Endothelial cell of umbilical vein (primary cell): ENCODE measurements at regions of chr15 and their contacts with region 1.

Region 1: GRCh38 chr15:38072348-38073177 is 138.1 kb downstream of the TMCO5A start:
- DNase-seq: peak; percentile 74
- H3K4me3 ChIP-seq: peak overlapping the region; percentile 11 to 61 (median 35)
- H3K27ac ChIP-seq: peak overlapping the region; percentile 69
- H3K4me1 ChIP-seq: peaks cover 40% of the 10 kb centered on the region
- H3K27me3 ChIP-seq: no peaks in the 10 kb centered on the region
- CTCF ChIP-seq: peak in 1 of 2 donors; percentile 1
- POLR2A ChIP-seq: peak; percentile 71

Region 2: GRCh38 chr15:37847776-37848175 is 224.8 kb before region 1 on chr15:
- CTCF ChIA-PET with region 1: no interaction called
- POLR2A ChIA-PET with region 1: no interaction called
- dilution Hi-C with region 1: no loop called
- intact Hi-C with region 1: no loop called
- DNase-seq: no peak
- H3K4me3 ChIP-seq: no peak overlapping the region
- H3K27ac ChIP-seq: no peak overlapping the region
- H3K4me1 ChIP-seq: no peaks in the 10 kb centered on the region
- H3K27me3 ChIP-seq: no peaks in the 10 kb centered on the region
- CTCF ChIP-seq: no peak
- POLR2A ChIP-seq: no peak

Region 3: DNA sequence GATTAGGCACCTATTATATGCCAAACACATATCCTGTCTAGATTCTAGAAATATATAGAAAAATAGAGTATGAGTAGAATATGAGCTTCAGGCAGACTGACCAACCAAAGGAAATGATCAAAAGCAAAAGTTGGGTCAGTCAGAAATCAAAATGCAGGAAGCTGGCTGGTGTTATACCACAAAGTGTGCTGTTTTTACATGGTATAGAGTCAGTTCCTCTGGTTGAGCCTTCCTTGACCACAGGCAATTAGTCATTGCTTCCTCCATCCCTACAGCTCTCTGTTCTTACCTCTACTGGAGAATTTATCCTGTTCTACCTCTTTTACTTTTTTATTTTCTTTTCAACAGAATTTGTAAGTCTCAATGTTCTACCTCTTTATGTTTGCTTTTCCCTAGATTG is 11.7 kb after region 1 on chr15:
- CTCF ChIA-PET with region 1: interaction called, 24 read pairs
- POLR2A ChIA-PET with region 1: no interaction called
- dilution Hi-C with region 1: no loop called
- intact Hi-C with region 1: loop called (anchors 1 kb)
- DNase-seq: peak; percentile 75
- H3K4me3 ChIP-seq: peak overlapping the region in 2 of 3 experiments; percentile 14 to 28
- H3K27ac ChIP-seq: peak overlapping the region; percentile 32
- H3K4me1 ChIP-seq: peaks cover 37% of the 10 kb centered on the region
- H3K27me3 ChIP-seq: no peaks in the 10 kb centered on the region
- CTCF ChIP-seq: no peak
- POLR2A ChIP-seq: no peak

Region 4: DNA sequence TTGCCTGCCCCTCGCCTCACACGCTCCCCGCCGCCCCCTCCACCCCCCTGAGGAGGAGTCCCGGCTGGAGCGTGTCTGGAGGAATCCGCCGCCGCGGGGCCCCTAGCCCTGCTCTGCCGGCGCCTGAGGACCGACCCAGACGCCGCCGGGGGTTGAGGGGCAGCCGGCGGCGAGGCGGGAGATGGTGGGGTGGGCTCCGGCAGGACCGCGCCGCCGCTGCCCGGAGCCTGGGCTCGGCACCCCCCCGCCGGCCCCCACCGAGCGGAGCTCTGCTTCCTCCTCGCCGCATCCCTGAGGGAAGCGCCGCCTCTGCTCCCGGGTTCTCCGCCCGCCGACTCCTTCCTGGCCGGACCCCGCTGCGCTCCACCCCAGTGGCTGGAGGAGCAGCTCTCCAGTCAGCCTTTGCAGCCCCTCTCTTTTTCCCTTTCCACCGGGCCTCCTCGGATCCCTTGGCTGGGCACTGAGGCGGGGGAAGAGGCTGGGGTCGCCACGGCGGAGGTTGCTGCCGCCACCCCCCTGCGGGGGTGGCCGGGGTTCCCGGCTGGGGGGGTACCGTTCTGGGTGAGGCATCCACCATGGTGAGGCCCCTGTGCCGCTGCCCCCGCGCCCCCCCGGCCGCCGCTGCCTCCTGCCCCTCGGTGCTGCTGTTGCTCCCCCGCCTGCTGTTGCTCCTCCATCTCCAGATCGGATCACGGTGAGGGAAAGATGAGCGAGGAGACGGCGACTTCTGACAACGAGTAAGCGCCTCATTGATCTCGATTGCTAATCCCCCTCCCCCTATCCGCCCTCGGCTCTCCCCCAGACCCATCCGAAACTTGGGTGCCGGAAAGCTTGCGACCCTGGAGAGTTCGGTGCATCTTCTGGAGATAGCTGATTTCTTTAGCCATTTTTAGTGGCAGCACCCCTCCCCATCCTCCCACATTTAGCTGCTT is 180.2 kb after region 1 on chr15 and contains the start of gene SPRED1:
- CTCF ChIA-PET with region 1: interaction called, 6 read pairs
- POLR2A ChIA-PET with region 1: no interaction called
- dilution Hi-C with region 1: no loop called
- intact Hi-C with region 1: loop called (anchors 1 kb)
- DNase-seq: peak; percentile 69
- H3K4me3 ChIP-seq: peak within 1 kb of the TSS; percentile 77 to 95 (median 91)
- H3K27ac ChIP-seq: peak within 1 kb of the TSS; percentile 69
- H3K4me1 ChIP-seq: peaks cover 22% of the 10 kb centered on the region
- H3K27me3 ChIP-seq: peaks cover 5 to 9% of the 10 kb centered on the region in 2 experiments
- CTCF ChIP-seq: no peak
- POLR2A ChIP-seq: no peak
- total RNA-seq, gene SPRED1: 10.7 and 16.4 TPM in 2 replicates

Region 5: DNA sequence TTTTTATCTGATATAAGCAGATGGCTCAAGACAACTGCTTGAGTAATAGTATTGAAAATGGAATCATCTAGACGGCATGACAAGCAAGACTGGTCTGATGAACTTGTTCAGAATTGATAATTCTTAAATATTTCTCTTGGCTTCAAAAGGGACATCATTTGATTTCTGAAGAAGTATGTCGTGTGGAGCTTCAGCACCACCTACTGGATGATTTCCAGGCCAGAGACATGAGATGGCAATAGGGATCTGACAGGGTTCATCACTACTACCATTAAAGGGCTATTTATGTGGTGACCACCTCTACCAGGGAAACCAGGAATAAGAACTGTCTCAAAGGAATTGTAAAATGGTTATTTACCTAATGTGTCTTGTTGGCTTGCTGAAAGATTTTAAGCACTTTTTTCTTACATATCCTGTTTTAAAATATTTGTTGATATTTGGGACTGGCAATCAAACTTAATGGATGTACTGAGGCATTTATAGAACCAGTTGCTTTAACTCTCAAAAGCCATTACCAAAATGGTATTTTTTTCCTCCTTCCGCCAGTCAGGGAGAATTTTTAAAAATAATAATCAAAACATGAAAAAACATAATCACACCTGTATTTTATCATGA is 281.9 kb after region 1 on chr15:
- CTCF ChIA-PET with region 1: interaction called, 3 read pairs
- POLR2A ChIA-PET with region 1: no interaction called
- dilution Hi-C with region 1: no loop called
- intact Hi-C with region 1: loop called (anchors 10 kb)
- DNase-seq: peak; percentile 80
- H3K4me3 ChIP-seq: no peak overlapping the region
- H3K27ac ChIP-seq: no peak overlapping the region
- H3K4me1 ChIP-seq: no peaks in the 10 kb centered on the region
- H3K27me3 ChIP-seq: no peaks in the 10 kb centered on the region
- CTCF ChIP-seq: peak; percentile 62 to 69
- POLR2A ChIP-seq: no peak

Region 6: GRCh38 chr15:38378161-38378560 is 305.6 kb after region 1 on chr15:
- CTCF ChIA-PET with region 1: no interaction called
- POLR2A ChIA-PET with region 1: no interaction called
- dilution Hi-C with region 1: no loop called
- intact Hi-C with region 1: no loop called
- DNase-seq: peak; percentile 85
- H3K4me3 ChIP-seq: no peak overlapping the region
- H3K27ac ChIP-seq: no peak overlapping the region
- H3K4me1 ChIP-seq: peaks cover 19% of the 10 kb centered on the region
- H3K27me3 ChIP-seq: peaks cover 0 to 4% of the 10 kb centered on the region in 2 experiments
- CTCF ChIP-seq: no peak
- POLR2A ChIP-seq: no peak